ENCODE measurements at regions of chr6 and their contacts with region 1.

Region 1: DNA sequence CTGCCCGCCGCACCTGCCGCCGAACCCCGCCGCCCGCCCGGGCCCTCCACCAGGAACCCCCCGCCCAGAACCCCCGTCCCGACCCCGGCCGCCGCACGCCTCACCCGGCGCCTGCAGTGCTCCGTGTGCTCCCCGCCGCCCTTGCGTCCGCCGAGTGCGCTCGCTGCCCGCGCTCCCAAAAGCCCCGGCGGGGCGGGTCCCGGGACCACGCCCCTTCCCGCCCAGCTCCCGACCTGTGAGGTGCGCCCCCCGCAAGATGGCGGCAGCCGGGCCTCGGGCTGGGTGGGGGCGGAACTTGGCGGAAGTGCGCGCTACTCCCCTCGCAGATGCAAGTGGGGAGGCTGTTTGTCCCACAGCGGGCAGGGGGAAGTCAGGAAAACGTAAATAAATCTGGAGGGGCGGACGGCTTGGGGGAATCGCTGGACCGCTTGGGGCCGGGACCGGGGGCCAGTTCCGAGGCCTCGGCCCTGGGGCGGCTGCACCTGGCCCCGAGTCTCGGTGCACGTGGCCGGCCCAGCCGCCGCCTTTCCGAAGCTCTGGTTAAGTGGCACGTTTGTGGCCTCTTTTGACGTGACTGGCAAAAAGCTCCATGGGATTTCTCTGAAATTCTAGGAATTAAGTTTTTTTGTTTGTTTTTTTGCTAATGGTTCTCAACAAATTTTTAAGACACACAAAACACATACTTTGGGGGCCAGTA is at the start of gene EZR:
- DNase-seq: peak; percentile 77 to 94 (median 84)
- ATAC-seq: peak; percentile 59 to 66
- H3K4me3 Mint-ChIP-seq: peak within 1 kb of the TSS; percentile 72 to 98 (median 88)
- H3K27ac Mint-ChIP-seq: peak within 1 kb of the TSS; percentile 77 to 99 (median 97)
- H3K4me1 Mint-ChIP-seq: peaks cover 22 to 50% (median 39%) of the 10 kb centered on the region in 4 donors
- H3K27me3 Mint-ChIP-seq: no peaks in the 10 kb centered on the region
- polyA plus RNA-seq, gene EZR: 127 to 168 (median 143) TPM

Region 2: DNA sequence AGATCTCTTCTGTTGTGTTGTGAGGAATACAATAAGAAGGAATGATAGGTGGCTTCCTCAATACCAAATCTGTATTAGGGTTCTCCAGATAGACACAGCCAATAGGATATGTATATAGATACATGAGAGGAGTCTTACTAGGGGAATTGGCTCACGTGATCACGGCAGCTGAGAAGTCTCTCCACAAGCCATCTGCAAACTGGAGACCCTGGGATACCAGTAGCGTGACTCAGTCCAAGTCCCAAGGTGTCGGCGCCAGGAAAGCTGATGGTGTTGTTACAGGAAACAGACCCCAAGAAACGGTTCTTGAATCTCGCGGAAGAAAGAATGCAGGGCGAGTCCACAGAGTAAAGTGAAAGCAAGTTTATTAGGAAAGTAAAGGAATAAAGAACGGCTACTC is 108.1 kb before region 1 on chr6:
- POLR2A ChIA-PET with region 1: no interaction called
- DNase-seq: no peak
- ATAC-seq: no peak
- H3K4me3 Mint-ChIP-seq: no peak overlapping the region
- H3K27ac Mint-ChIP-seq: no peak overlapping the region
- H3K4me1 Mint-ChIP-seq: peaks cover 8 to 25% (median 15%) of the 10 kb centered on the region in 4 donors
- H3K27me3 Mint-ChIP-seq: no peaks in the 10 kb centered on the region

Region 3: GRCh38 chr6:158803733-158804143 is 15.6 kb before region 1 on chr6:
- POLR2A ChIA-PET with region 1: interaction called, 21 read pairs
- DNase-seq: peak in 6 of 10 donors; percentile 35 to 67 (median 52)
- ATAC-seq: peak; percentile 47 to 66
- H3K4me3 Mint-ChIP-seq: peak overlapping the region; percentile 62 to 86 (median 80)
- H3K27ac Mint-ChIP-seq: peak overlapping the region; percentile 77 to 97 (median 88)
- H3K4me1 Mint-ChIP-seq: peaks cover 47 to 96% (median 92%) of the 10 kb centered on the region in 4 donors
- H3K27me3 Mint-ChIP-seq: no peaks in the 10 kb centered on the region

Region 4: GRCh38 chr6:158831197-158831970 is 12.0 kb after region 1 on chr6:
- POLR2A ChIA-PET with region 1: interaction called, 13 read pairs
- DNase-seq: no peak
- ATAC-seq: no peak
- H3K4me3 Mint-ChIP-seq: no peak overlapping the region
- H3K27ac Mint-ChIP-seq: peak overlapping the region in 5 of 10 donors; percentile 3 to 66 (median 59)
- H3K4me1 Mint-ChIP-seq: peaks cover 0 to 17% (median 2%) of the 10 kb centered on the region in 4 donors
- H3K27me3 Mint-ChIP-seq: peaks cover 0 to 1% (median 0%) of the 10 kb centered on the region in 5 donors

Region 5: DNA sequence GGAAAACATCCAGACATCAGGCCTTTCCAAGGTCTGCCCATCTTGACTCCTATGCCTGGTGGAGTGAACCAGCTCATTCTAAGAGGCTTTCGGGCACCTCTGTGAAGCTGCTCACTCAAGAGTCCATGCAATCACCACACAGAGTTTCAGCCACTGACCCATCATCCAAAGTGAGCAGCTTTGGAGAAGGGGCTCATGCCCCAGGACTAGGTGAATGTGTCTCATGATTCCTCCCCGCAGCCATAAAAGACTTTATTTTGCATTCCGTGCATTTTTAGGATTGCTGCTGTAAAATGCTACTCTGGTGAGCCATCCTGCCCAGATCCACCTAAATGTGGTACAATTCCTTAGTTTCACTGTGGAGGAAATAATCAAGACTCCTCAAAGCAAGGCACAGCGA is 44.3 kb after region 1 on chr6:
- POLR2A ChIA-PET with region 1: interaction called, 89 read pairs
- DNase-seq: no peak
- ATAC-seq: no peak
- H3K4me3 Mint-ChIP-seq: no peak overlapping the region
- H3K27ac Mint-ChIP-seq: peak overlapping the region in 3 of 10 donors; percentile 36 to 52 (median 40)
- H3K4me1 Mint-ChIP-seq: peaks cover 2 to 37% (median 8%) of the 10 kb centered on the region in 4 donors
- H3K27me3 Mint-ChIP-seq: no peaks in the 10 kb centered on the region

Region 6: DNA sequence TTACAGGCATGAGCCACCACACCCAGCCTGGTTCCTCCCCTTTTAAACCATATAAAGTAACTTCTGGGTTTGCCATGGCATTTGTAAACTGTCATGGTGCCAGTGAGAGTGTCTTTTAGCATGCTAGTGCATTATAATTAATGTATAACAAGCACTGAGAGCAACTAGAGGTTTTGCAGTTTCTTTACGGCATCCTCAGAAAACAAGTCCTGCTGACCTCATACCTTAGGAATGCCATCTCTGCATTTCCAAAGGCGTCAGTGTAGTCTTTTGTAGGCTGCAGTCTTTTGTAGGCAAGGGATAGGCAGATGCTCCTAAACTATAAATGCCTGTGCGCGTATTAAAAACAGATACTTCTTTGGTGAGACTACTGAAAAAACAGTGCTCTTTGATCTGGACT is 74.8 kb after region 1 on chr6:
- POLR2A ChIA-PET with region 1: no interaction called
- DNase-seq: no peak
- ATAC-seq: no peak
- H3K4me3 Mint-ChIP-seq: no peak overlapping the region
- H3K27ac Mint-ChIP-seq: no peak overlapping the region
- H3K4me1 Mint-ChIP-seq: peaks cover 0 to 3% (median 1%) of the 10 kb centered on the region in 4 donors
- H3K27me3 Mint-ChIP-seq: no peaks in the 10 kb centered on the region

Region 7: GRCh38 chr6:158910484-158911348 is 91.4 kb after region 1 on chr6:
- POLR2A ChIA-PET with region 1: interaction called, 11 read pairs
- DNase-seq: peak in 3 of 10 donors; percentile 16 to 33 (median 27)
- ATAC-seq: peak; percentile 69 to 74
- H3K4me3 Mint-ChIP-seq: peak overlapping the region; percentile 59 to 82 (median 74)
- H3K27ac Mint-ChIP-seq: peak overlapping the region; percentile 66 to 91 (median 86)
- H3K4me1 Mint-ChIP-seq: peaks cover 18 to 49% (median 46%) of the 10 kb centered on the region in 4 donors
- H3K27me3 Mint-ChIP-seq: no peaks in the 10 kb centered on the region

Measured in naive thymus-derived CD8-positive, alpha-beta T cell (primary cell).